ENCODE measurements at regions of chr16 and their contacts with region 1.

Region 1: DNA sequence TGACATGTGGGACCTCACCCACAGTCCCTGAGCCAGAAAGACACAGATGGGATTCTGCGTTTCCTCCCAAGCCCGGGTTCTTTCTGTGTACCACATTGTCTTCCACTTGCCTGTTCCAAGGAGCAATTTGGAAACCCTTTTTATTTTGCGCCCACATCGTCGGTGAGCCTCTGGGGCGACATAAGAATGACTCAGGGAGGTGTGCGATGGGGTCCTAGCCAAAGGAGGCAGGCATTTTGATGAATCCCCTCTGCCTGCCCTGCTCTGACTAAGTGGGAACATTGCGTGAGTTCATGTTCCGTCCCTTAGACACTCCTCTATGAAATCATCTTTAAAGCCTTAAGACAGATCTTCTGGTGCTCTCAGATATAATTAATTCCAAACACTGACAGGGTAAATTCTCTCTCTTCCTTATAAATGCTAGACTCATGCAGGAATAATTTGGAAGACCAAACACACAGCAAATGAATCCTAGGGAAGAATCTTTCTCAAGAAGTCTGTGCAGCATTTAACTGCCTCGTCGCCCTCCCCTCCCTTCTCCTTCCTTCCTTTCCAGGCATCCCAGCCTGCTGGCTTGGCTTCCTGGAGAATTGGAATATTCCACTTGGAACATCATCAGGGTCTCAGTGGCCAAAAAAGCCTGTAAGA is 52.7 kb upstream of the FOXF1 start:
- DNase-seq: no peak
- H3K4me3 ChIP-seq: no peak overlapping the region
- H3K27ac ChIP-seq: peak overlapping the region; percentile 31 to 46
- H3K4me1 ChIP-seq: no peaks in the 10 kb centered on the region
- H3K27me3 ChIP-seq: no peaks in the 10 kb centered on the region
- CTCF ChIP-seq: no peak
- POLR2A ChIP-seq: no peak

Region 2: GRCh38 chr16:86363057-86363490 is 94.6 kb before region 1 on chr16:
- intact Hi-C with region 1: loop called (anchors 5 kb)
- DNase-seq: peak; percentile 77
- H3K4me3 ChIP-seq: no peak overlapping the region
- H3K27ac ChIP-seq: peak overlapping the region; percentile 16 to 66
- H3K4me1 ChIP-seq: no peaks in the 10 kb centered on the region
- H3K27me3 ChIP-seq: no peaks in the 10 kb centered on the region
- CTCF ChIP-seq: no peak
- POLR2A ChIP-seq: no peak

Region 3: DNA sequence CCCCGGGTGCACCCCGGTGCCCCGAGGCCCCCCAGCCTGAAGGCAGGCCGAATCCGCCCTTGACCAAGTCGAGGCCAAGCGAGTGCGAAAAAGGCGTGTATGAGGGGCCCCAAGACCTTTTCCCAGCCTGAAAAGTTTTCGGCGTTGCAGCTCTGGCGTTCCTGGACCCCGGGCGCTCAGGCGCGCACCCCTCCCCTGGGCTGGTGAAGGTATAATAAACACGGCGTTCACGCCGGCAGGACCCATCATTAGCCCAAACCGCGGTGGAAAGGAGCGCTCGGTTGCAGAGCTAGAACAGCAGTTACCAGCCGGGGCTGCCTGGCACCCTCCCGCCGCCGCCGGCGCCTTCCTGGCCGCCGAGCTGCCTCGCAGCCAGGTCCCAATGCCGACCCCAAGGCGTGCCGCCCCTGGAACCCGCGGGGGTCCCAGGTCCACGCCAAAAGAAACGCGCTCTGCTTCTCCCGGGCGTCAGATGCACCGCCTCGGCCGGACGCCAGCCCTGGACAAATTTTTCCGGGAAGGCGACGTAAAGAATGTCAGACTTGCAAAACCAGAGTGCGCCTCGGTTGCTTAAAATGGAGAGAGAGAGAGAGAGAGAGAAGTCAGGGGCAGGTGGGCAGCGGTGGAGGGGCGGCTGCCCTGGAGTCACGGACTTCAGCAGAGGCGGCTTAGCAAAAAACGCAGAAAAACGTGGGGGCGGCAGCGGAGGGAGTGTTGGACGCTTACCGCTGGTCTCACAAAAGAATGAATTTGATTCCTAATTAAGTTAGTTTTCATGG is 41.2 kb after region 1 on chr16:
- intact Hi-C with region 1: loop called (anchors 5 kb)
- DNase-seq: no peak
- H3K4me3 ChIP-seq: peak overlapping the region; percentile 17 to 28
- H3K27ac ChIP-seq: peak overlapping the region; percentile 72 to 80
- H3K4me1 ChIP-seq: no peaks in the 10 kb centered on the region
- H3K27me3 ChIP-seq: peaks cover 58% of the 10 kb centered on the region
- CTCF ChIP-seq: no peak
- POLR2A ChIP-seq: no peak

Region 4: DNA sequence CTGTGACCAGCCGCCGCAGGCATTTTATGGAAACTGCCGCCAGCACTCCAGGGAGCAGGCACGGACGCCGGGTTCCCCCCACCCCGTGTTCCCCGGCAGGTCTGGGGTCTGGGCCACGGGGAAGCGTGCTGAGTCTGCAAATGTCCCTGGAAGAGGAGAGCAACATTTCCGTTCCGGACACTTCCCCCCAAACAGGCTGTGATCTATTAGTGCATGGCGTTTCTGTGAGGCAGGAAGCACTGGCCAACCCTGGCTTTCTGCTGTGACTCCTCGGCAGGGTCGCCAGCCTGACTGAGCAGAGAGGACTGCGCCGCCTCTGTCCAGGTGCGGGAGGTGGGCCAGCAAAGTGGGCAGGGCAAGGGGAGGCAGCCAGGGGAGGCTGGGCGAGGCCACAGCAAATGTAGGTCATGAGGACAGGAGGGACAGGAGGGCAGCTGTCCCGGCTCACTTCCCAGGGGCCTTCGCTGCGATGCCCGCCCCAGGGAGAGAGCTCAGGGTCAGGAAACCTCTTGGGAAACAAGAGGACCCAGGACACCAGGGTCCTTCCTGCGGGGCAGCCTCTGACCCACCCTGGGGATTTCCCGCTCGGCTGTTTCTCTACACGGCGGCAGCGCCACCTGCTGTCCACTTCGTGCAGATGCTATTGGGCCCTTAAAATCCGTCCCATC is 62.2 kb after region 1 on chr16:
- intact Hi-C with region 1: no loop called
- DNase-seq: peak; percentile 32
- H3K4me3 ChIP-seq: no peak overlapping the region
- H3K27ac ChIP-seq: peak overlapping the region in 1 of 2 donors; percentile 35
- H3K4me1 ChIP-seq: no peaks in the 10 kb centered on the region
- H3K27me3 ChIP-seq: peaks cover 30% of the 10 kb centered on the region
- CTCF ChIP-seq: peak; percentile 73 to 90 (median 84)
- POLR2A ChIP-seq: no peak

Measured in prostate gland (tissue), 2 donors.